Activated CD8-positive, alpha-beta T cell treated with anti-CD3 and anti-CD28 coated beads, Interleukin-2, amount 10 ng/mL, durations not matched to agents 7 days and 5 days (primary cell): ENCODE measurements at regions of chr19 and their contacts with region 1.

Region 1: GRCh38 chr19:39671738-39672363 is 16.1 kb downstream of the LGALS16 start:
- DNase-seq: peak; percentile 70
- ATAC-seq: peak; percentile 86
- H3K4me3 Mint-ChIP-seq: no peak overlapping the region
- H3K27ac Mint-ChIP-seq: no peak overlapping the region
- H3K4me1 Mint-ChIP-seq: peaks cover 22% of the 10 kb centered on the region
- H3K27me3 Mint-ChIP-seq: peaks cover 22% of the 10 kb centered on the region

Region 2: DNA sequence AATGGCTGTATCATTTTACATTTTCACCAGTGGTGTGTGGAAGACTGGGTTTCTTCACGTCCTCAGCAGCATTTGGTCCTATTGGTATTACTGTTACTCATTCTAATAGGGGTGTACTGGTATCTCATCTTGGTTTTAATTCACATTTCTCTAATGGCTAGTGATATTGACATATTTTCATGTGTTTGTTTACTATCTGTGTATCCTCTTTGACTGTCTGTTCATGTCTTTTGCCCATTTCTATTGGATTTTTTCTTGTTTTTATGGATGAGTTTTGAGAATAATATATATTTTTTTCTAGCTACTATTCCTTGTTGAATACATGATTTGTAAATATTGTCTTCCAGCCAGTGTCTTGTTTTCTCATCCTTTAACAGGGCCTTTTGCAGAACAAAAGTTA is 389.8 kb before region 1 on chr19:
- CTCF ChIA-PET with region 1: no interaction called
- POLR2A ChIA-PET with region 1: no interaction called
- DNase-seq: no peak
- ATAC-seq: no peak
- H3K4me3 Mint-ChIP-seq: no peak overlapping the region
- H3K27ac Mint-ChIP-seq: no peak overlapping the region
- H3K4me1 Mint-ChIP-seq: no peaks in the 10 kb centered on the region
- H3K27me3 Mint-ChIP-seq: peaks cover 24% of the 10 kb centered on the region

Region 3: GRCh38 chr19:39539519-39540332 is 132.1 kb before region 1 on chr19 and contains the start of gene EID2:
- CTCF ChIA-PET with region 1: interaction called, 10 read pairs
- POLR2A ChIA-PET with region 1: no interaction called
- DNase-seq: peak; percentile 97
- ATAC-seq: peak; percentile 91
- H3K4me3 Mint-ChIP-seq: peak within 1 kb of the TSS; percentile 95
- H3K27ac Mint-ChIP-seq: peak within 1 kb of the TSS; percentile 94
- H3K4me1 Mint-ChIP-seq: peaks cover 58% of the 10 kb centered on the region
- H3K27me3 Mint-ChIP-seq: no peaks in the 10 kb centered on the region
- total RNA-seq, gene EID2: 18.9 to 19.9 TPM

Region 4: DNA sequence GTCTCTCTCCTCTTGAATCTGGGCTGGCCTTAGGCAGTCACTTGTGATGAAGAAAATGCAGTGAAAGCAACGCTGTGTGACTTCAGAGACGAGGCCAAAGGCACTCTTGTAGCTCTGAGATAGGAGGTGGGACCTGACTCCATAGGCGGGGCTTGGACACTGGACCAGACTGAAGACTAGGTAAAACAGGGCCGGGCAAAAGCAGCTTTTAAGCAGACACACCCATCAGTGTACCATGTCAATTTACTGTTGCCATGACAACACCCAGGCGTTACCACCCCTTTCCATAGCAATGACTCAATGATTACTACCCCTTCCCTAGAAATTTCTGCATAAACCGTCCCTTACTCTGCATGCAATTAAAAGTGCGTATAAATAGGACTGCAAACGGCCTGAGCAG is 125.3 kb before region 1 on chr19:
- CTCF ChIA-PET with region 1: interaction called, 69 read pairs
- POLR2A ChIA-PET with region 1: no interaction called
- DNase-seq: no peak
- ATAC-seq: no peak
- H3K4me3 Mint-ChIP-seq: no peak overlapping the region
- H3K27ac Mint-ChIP-seq: no peak overlapping the region
- H3K4me1 Mint-ChIP-seq: peaks cover 46% of the 10 kb centered on the region
- H3K27me3 Mint-ChIP-seq: no peaks in the 10 kb centered on the region

Region 5: GRCh38 chr19:39557441-39558151 is 114.3 kb before region 1 on chr19:
- CTCF ChIA-PET with region 1: interaction called, 69 read pairs
- POLR2A ChIA-PET with region 1: no interaction called
- DNase-seq: no peak
- ATAC-seq: peak; percentile 59
- H3K4me3 Mint-ChIP-seq: peak overlapping the region; percentile 55
- H3K27ac Mint-ChIP-seq: peak overlapping the region; percentile 90
- H3K4me1 Mint-ChIP-seq: peaks cover 31% of the 10 kb centered on the region
- H3K27me3 Mint-ChIP-seq: peaks cover 3% of the 10 kb centered on the region